Endothelial cell of umbilical vein (primary cell): ENCODE measurements at regions of chr9 and their contacts with region 1.

Region 1: GRCh38 chr9:128818099-128818838 is at the start of gene ENDOG:
- DNase-seq: peak; percentile 99
- H3K4me3 ChIP-seq: peak within 1 kb of the TSS in 2 of 3 experiments; percentile 57 to 63
- H3K27ac ChIP-seq: no peak within 1 kb of the TSS
- H3K4me1 ChIP-seq: peaks cover 6% of the 10 kb centered on the region
- H3K27me3 ChIP-seq: no peaks in the 10 kb centered on the region
- CTCF ChIP-seq: peak; percentile 99
- POLR2A ChIP-seq: peak; percentile 94
- total RNA-seq, gene ENDOG: 17.9 and 18.0 TPM in 2 replicates

Region 2: GRCh38 chr9:128635283-128636023 is 182.8 kb before region 1 on chr9:
- CTCF ChIA-PET with region 1: interaction called, 4 read pairs
- POLR2A ChIA-PET with region 1: no interaction called
- dilution Hi-C with region 1: no loop called
- intact Hi-C with region 1: loop called (anchors 5 kb)
- DNase-seq: peak; percentile 86
- H3K4me3 ChIP-seq: no peak overlapping the region
- H3K27ac ChIP-seq: peak overlapping the region; percentile 64
- H3K4me1 ChIP-seq: peaks cover 11% of the 10 kb centered on the region
- H3K27me3 ChIP-seq: no peaks in the 10 kb centered on the region
- CTCF ChIP-seq: peak; percentile 83 to 86
- POLR2A ChIP-seq: peak; percentile 61

Region 3: GRCh38 chr9:128733256-128733655 is 85.0 kb before region 1 on chr9:
- CTCF ChIA-PET with region 1: interaction called, 22 read pairs
- POLR2A ChIA-PET with region 1: no interaction called
- dilution Hi-C with region 1: no loop called
- intact Hi-C with region 1: no loop called
- DNase-seq: peak; percentile 88
- H3K4me3 ChIP-seq: no peak overlapping the region
- H3K27ac ChIP-seq: no peak overlapping the region
- H3K4me1 ChIP-seq: no peaks in the 10 kb centered on the region
- H3K27me3 ChIP-seq: no peaks in the 10 kb centered on the region
- CTCF ChIP-seq: peak; percentile 75 to 85
- POLR2A ChIP-seq: no peak

Region 4: GRCh38 chr9:128829477-128830251 is 11.4 kb after region 1 on chr9 and contains the start of gene SPOUT1:
- CTCF ChIA-PET with region 1: interaction called, 40 read pairs
- POLR2A ChIA-PET with region 1: interaction called, 3 read pairs
- dilution Hi-C with region 1: no loop called
- intact Hi-C with region 1: loop called (anchors 1 kb)
- DNase-seq: peak; percentile 92
- H3K4me3 ChIP-seq: peak within 1 kb of the TSS; percentile 39 to 94 (median 64)
- H3K27ac ChIP-seq: no peak within 1 kb of the TSS
- H3K4me1 ChIP-seq: peaks cover 5% of the 10 kb centered on the region
- H3K27me3 ChIP-seq: no peaks in the 10 kb centered on the region
- CTCF ChIP-seq: no peak
- POLR2A ChIP-seq: peak; percentile 87
- total RNA-seq, gene SPOUT1: 51.6 and 59.3 TPM in 2 replicates

Region 5: GRCh38 chr9:129028192-129028957 is 210.1 kb after region 1 on chr9 and contains the start of gene SH3GLB2:
- CTCF ChIA-PET with region 1: no interaction called
- POLR2A ChIA-PET with region 1: no interaction called
- dilution Hi-C with region 1: no loop called
- intact Hi-C with region 1: loop called (anchors 1 kb)
- DNase-seq: peak; percentile 95
- H3K4me3 ChIP-seq: peak within 1 kb of the TSS; percentile 47 to 74 (median 54)
- H3K27ac ChIP-seq: no peak within 1 kb of the TSS
- H3K4me1 ChIP-seq: peaks cover 7% of the 10 kb centered on the region
- H3K27me3 ChIP-seq: no peaks in the 10 kb centered on the region
- CTCF ChIP-seq: peak; percentile 78 to 93
- POLR2A ChIP-seq: no peak
- total RNA-seq, gene SH3GLB2: 55.8 and 58.8 TPM in 2 replicates